ENCODE measurements at regions of chr20 and their contacts with region 1.

Region 1: DNA sequence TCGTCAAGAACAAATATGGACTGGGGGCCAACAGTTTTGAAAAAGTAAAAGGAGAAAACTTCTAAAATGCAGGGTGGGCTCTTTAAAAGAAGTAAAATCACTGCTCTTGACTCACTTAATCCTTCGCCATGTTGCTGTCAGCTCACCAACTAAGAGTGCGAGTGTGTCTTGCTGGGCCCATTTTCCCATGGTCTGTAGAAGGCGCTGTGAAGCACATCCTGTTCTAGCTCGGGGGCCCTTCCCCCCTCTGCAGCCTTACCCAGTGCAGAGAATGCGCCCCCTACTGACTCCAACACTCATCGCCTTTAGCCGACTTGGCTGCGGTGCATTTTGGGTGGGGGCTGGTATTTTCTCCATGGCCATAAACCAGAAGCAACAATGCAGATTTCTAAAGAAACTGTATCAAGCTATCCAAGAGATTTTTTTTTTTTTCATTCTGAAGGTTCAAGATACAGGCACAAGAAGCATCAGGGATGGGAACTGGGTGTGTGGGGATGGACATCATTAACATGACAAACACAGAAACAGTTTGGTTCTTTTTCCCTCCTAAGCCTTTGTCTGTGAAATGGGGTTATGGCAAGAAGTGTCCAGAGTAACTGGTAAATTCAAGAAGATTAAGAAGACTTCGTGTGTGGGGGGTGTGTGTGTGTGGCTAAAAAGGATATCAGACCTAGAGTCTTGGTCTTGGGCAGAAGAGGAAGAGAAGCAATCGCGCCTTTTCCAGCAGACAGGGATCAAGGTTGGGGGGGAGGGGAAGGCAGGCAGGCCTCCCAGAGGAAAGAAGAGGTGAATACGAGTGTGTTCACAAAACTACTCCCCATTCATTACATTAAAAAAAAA is 1.7 kb downstream of the ADNP start:
- DNase-seq: peak; percentile 88
- ATAC-seq: peak; percentile 83
- H3K4me3 ChIP-seq: peak overlapping the region; percentile 94
- H3K27ac ChIP-seq: peak overlapping the region; percentile 70
- H3K4me1 ChIP-seq: peaks cover 5% of the 10 kb centered on the region; the same call in 1 of the 2 replicates
- H3K27me3 ChIP-seq: no peaks in the 10 kb centered on the region
- CTCF ChIP-seq: peak; percentile 98 to 100 (median 100); a peak in 5 of 6 replicates
- EP300 ChIP-seq: peak; percentile 15 to 74; a peak in 1 of 4 replicates
- POLR2A ChIP-seq: peak; percentile 64
- RAD21 ChIP-seq: peak; percentile 86

Region 2: GRCh38 chr20:50815162-50815989 is 114.1 kb before region 1 on chr20:
- CTCF ChIA-PET with region 1: interaction called, 78 read pairs
- POLR2A ChIA-PET with region 1: interaction called, 17 read pairs
- RAD21 ChIA-PET with region 1: interaction called, 33 read pairs
- SMC1A ChIA-PET with region 1: interaction called, 20 read pairs
- in situ Hi-C with region 1: no loop called
- intact Hi-C with region 1: loop called (anchors 1 kb)
- DNase-seq: peak; percentile 65
- ATAC-seq: peak; percentile 57
- H3K4me3 ChIP-seq: peak overlapping the region; percentile 53
- H3K27ac ChIP-seq: peak overlapping the region; percentile 95
- H3K4me1 ChIP-seq: peaks cover 92% of the 10 kb centered on the region
- H3K27me3 ChIP-seq: no peaks in the 10 kb centered on the region
- CTCF ChIP-seq: no peak
- EP300 ChIP-seq: peak in 1 of 2 experiments; percentile 57; a peak in 2 of 4 replicates
- POLR2A ChIP-seq: no peak
- RAD21 ChIP-seq: no peak

Region 3: GRCh38 chr20:50844430-50845100 is 85.0 kb before region 1 on chr20:
- CTCF ChIA-PET with region 1: interaction called, 9 read pairs
- POLR2A ChIA-PET with region 1: interaction called, 5 read pairs
- RAD21 ChIA-PET with region 1: interaction called, 11 read pairs
- SMC1A ChIA-PET with region 1: interaction called, 9 read pairs
- in situ Hi-C with region 1: no loop called
- intact Hi-C with region 1: no loop called
- DNase-seq: peak; percentile 83
- ATAC-seq: peak; percentile 96
- H3K4me3 ChIP-seq: no peak overlapping the region; the same call in 1 of the 2 replicates
- H3K27ac ChIP-seq: peak overlapping the region; percentile 96
- H3K4me1 ChIP-seq: peaks cover 50% of the 10 kb centered on the region
- H3K27me3 ChIP-seq: no peaks in the 10 kb centered on the region
- CTCF ChIP-seq: peak in 1 of 3 experiments; percentile 6; a peak in 1 of 6 replicates
- EP300 ChIP-seq: peak; percentile 76 to 83; a peak in 3 of 4 replicates
- POLR2A ChIP-seq: peak; percentile 73
- RAD21 ChIP-seq: peak; percentile 33

Region 4: GRCh38 chr20:50898475-50898874 is 31.0 kb before region 1 on chr20:
- CTCF ChIA-PET with region 1: interaction called, 20 read pairs
- POLR2A ChIA-PET with region 1: interaction called, 3 read pairs
- RAD21 ChIA-PET with region 1: interaction called, 5 read pairs
- SMC1A ChIA-PET with region 1: interaction called, 6 read pairs
- in situ Hi-C with region 1: no loop called
- intact Hi-C with region 1: no loop called
- DNase-seq: no peak
- ATAC-seq: no peak
- H3K4me3 ChIP-seq: no peak overlapping the region
- H3K27ac ChIP-seq: no peak overlapping the region
- H3K4me1 ChIP-seq: no peaks in the 10 kb centered on the region
- H3K27me3 ChIP-seq: no peaks in the 10 kb centered on the region
- CTCF ChIP-seq: no peak
- EP300 ChIP-seq: no peak
- POLR2A ChIP-seq: no peak
- RAD21 ChIP-seq: no peak

Region 5: GRCh38 chr20:50958615-50959542 is 29.4 kb after region 1 on chr20 and contains the start of gene MOCS3:
- CTCF ChIA-PET with region 1: interaction called, 14 read pairs
- POLR2A ChIA-PET with region 1: interaction called, 17 read pairs
- RAD21 ChIA-PET with region 1: interaction called, 6 read pairs
- SMC1A ChIA-PET with region 1: interaction called, 7 read pairs
- in situ Hi-C with region 1: no loop called
- intact Hi-C with region 1: loop called (anchors 1 kb)
- DNase-seq: peak; percentile 86
- ATAC-seq: peak; percentile 88
- H3K4me3 ChIP-seq: peak within 1 kb of the TSS; percentile 88
- H3K27ac ChIP-seq: peak within 1 kb of the TSS; percentile 96
- H3K4me1 ChIP-seq: peaks cover 13% of the 10 kb centered on the region
- H3K27me3 ChIP-seq: no peaks in the 10 kb centered on the region
- CTCF ChIP-seq: no peak
- EP300 ChIP-seq: no peak
- POLR2A ChIP-seq: no peak; the same call in 1 of the 2 replicates
- RAD21 ChIP-seq: no peak
- polyA plus RNA-seq, gene MOCS3: 0.87 to 0.99 TPM

Region 6: GRCh38 chr20:50975701-50976330 is 46.3 kb after region 1 on chr20:
- CTCF ChIA-PET with region 1: no interaction called
- POLR2A ChIA-PET with region 1: no interaction called
- RAD21 ChIA-PET with region 1: no interaction called
- SMC1A ChIA-PET with region 1: no interaction called
- in situ Hi-C with region 1: no loop called
- intact Hi-C with region 1: no loop called
- DNase-seq: no peak
- ATAC-seq: no peak
- H3K4me3 ChIP-seq: no peak overlapping the region
- H3K27ac ChIP-seq: no peak overlapping the region
- H3K4me1 ChIP-seq: no peaks in the 10 kb centered on the region
- H3K27me3 ChIP-seq: no peaks in the 10 kb centered on the region; a peak in 2 of 4 replicates
- CTCF ChIP-seq: no peak
- EP300 ChIP-seq: no peak
- POLR2A ChIP-seq: no peak
- RAD21 ChIP-seq: no peak